A673 (cell line): ENCODE measurements at regions of chr2 and their contacts with region 1.

Region 1: DNA sequence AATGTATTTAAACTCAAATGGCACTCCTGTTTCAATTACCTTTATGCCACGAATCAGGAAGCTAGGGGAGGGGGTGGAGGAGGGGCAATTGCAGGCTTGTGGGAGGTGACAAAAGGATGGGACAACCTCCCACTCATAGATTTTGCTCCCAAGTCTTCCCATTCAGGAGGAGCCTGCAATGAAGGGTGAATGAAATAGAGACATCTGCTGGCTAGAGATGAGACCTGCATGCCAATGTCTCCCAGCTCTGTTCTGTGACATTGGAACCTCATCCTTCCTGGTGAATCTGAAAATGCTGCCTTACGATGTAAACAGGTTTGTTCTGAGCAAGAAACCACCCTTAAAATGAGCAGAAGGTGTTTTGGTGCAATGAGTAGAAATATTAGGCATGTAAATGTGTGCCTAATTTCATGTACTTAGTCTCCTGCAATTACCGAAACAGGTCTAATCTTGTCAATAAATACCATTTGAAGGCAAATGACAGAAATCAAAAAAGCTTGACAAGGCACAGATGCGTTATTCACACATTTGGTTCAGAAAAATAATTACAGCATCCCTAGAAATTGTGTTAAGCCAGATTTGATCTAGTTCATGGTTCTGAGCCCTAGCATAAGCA is 2.7 kb upstream of the PID1 start:
- DNase-seq: peak; percentile 90
- H3K4me3 ChIP-seq: peak overlapping the region; percentile 22
- H3K27ac ChIP-seq: no peak overlapping the region
- H3K4me1 ChIP-seq: peaks cover 5% of the 10 kb centered on the region
- H3K27me3 ChIP-seq: peaks cover 7% of the 10 kb centered on the region
- CTCF ChIP-seq: peak; percentile 85

Region 2: DNA sequence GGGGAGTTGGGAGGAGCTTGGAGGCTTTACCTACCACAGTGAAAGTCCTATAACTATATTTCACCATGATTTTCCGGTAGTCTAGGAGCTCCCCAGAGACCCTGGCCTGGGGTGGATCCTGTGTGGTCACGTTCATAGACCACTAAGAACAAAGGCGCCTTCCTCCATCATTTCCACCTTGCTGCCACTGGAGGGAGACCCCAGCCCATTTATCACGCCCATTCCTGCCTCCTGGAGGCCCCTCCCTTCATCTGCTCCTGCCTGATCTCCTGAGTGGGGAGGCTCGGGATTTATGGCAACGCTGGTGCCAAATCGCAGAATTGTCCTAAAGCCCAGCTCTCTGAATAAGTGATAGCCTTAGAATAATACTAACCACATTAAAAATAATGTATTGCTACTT is 584.8 kb before region 1 on chr2:
- CTCF ChIA-PET with region 1: interaction called, 6 read pairs
- POLR2A ChIA-PET with region 1: no interaction called
- intact Hi-C with region 1: loop called (anchors 5 kb)
- DNase-seq: peak; percentile 70
- H3K4me3 ChIP-seq: no peak overlapping the region
- H3K27ac ChIP-seq: no peak overlapping the region
- H3K4me1 ChIP-seq: peaks cover 5% of the 10 kb centered on the region
- H3K27me3 ChIP-seq: no peaks in the 10 kb centered on the region
- CTCF ChIP-seq: peak; percentile 59

Region 3: GRCh38 chr2:229133155-229133772 is 140.6 kb before region 1 on chr2:
- CTCF ChIA-PET with region 1: no interaction called
- POLR2A ChIA-PET with region 1: interaction called, 3 read pairs
- intact Hi-C with region 1: loop called (anchors 1 kb)
- DNase-seq: peak; percentile 57
- H3K4me3 ChIP-seq: no peak overlapping the region
- H3K27ac ChIP-seq: no peak overlapping the region
- H3K4me1 ChIP-seq: no peaks in the 10 kb centered on the region
- H3K27me3 ChIP-seq: no peaks in the 10 kb centered on the region
- CTCF ChIP-seq: peak; percentile 64

Region 4: GRCh38 chr2:229519655-229520430 is 246.0 kb after region 1 on chr2:
- CTCF ChIA-PET with region 1: no interaction called
- POLR2A ChIA-PET with region 1: no interaction called
- intact Hi-C with region 1: no loop called
- DNase-seq: no peak
- H3K4me3 ChIP-seq: no peak overlapping the region
- H3K27ac ChIP-seq: no peak overlapping the region
- H3K4me1 ChIP-seq: no peaks in the 10 kb centered on the region
- H3K27me3 ChIP-seq: no peaks in the 10 kb centered on the region
- CTCF ChIP-seq: no peak